ENCODE measurements at regions of chr10 and their contacts with region 1.

Region 1: GRCh38 chr10:45464958-45465567 is 91.0 kb downstream of the ALOX5 start:
- H3K4me3 Mint-ChIP-seq: peak overlapping the region; percentile 52
- H3K27ac Mint-ChIP-seq: peak overlapping the region; percentile 31
- H3K4me1 Mint-ChIP-seq: peaks cover 91% of the 10 kb centered on the region
- H3K27me3 Mint-ChIP-seq: no peaks in the 10 kb centered on the region

Region 2: DNA sequence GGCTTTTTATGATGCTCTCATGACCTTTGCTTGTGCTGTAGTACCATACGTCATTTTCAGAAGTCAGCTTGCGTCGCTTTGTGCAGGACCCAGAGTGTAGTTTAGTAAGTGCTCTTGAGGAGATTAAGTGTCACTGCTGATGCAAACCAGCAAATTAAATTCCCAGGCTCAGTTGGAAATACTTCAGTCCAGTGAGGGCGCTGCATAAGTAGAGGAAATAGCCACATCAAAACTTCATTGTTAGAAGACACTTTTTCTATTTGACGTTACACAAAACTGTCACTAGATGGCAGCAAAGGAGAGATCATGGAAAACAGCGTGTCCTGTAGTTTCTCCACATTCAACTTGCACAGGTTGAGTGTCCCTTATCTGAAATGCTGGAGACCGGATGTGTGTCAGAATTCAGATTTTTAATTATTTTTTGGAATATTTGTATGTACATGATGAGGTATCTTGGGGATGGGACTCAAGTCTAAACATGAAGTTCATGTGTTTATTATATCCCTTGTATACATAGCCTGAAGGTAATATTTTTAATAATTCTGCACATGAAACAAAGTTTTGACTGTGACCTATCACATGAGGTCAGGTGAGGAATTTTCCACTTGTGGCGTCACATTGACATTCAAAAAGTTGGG is 456.4 kb before region 1 on chr10:
- intact Hi-C with region 1: loop called (anchors 5 kb)
- H3K4me3 Mint-ChIP-seq: no peak overlapping the region
- H3K27ac Mint-ChIP-seq: no peak overlapping the region
- H3K4me1 Mint-ChIP-seq: peaks cover 14% of the 10 kb centered on the region
- H3K27me3 Mint-ChIP-seq: no peaks in the 10 kb centered on the region

Region 3: DNA sequence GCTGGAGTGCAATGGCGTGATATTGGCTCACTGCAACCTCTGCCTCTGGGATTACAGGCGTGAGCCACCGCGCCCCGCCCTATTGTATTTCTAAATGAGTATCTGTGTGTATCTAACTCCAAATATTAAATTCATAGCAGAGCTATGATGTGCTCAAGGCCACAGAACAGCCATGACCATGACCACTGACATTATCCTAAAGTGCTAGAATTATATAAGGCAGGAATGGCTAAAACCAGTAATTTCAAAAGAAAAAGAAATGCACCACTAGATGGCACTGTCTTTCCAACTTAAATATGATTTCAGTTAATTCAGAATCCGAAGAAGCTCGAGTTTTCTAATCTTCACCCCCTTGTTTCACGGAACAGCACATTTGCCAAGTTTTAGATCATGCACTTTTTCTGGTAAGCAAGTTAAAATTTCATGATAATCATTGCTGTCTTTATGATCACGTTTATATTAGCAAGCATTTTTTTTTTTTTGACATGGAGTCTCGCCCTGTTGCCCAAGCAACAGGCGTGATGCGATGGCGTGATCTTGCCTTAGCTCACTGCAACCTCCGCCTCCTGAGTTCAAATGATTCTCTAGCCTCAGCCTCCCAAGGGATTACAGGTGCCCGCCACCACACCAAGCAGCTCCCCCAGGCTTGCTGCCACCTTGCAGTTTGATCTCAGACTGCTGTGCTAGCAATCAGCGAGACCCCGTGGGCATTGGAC is 214.9 kb before region 1 on chr10:
- intact Hi-C with region 1: loop called (anchors 2 kb)
- H3K4me3 Mint-ChIP-seq: peak overlapping the region; percentile 56
- H3K27ac Mint-ChIP-seq: peak overlapping the region; percentile 64
- H3K4me1 Mint-ChIP-seq: peaks cover 25% of the 10 kb centered on the region
- H3K27me3 Mint-ChIP-seq: peaks cover 10% of the 10 kb centered on the region

Region 4: DNA sequence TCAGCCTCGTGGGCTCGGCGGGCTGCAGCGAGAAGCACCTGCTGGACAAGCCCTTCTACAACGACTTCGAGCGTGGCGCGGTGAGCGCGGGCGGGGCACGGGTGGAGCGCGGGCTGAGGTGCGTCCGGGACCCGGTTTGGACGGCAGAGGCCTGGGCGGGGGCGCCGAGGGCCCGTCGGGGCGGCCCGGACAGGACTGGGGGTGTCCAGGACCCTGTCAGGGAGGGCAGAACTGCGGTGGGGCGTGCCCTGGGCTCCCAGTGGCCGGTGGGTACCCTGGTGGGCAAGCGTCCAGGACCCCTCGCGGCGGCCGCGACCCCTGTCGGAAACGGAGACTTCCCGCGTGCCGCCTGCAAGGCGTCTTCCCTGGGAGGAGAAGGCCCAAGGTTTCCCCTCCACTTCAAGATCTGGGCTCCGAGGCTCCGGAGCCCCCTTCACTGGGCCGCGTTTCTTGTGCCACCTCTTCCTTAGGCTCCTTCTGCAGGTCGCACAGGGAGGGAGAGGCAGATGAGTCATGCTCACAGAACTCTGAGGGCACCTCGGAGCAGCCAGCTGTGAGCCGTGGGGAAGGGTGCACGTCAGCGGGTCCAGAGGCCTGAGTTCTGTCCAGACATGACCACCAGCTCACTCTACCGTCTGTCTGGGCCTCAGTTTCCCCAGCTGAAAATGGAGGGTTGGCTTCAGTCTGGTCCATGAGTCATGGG is 90.6 kb before region 1 on chr10:
- intact Hi-C with region 1: loop called (anchors 5 kb)
- H3K4me3 Mint-ChIP-seq: peak overlapping the region; percentile 87
- H3K27ac Mint-ChIP-seq: peak overlapping the region; percentile 77
- H3K4me1 Mint-ChIP-seq: peaks cover 68% of the 10 kb centered on the region
- H3K27me3 Mint-ChIP-seq: peaks cover 16% of the 10 kb centered on the region

Region 5: DNA sequence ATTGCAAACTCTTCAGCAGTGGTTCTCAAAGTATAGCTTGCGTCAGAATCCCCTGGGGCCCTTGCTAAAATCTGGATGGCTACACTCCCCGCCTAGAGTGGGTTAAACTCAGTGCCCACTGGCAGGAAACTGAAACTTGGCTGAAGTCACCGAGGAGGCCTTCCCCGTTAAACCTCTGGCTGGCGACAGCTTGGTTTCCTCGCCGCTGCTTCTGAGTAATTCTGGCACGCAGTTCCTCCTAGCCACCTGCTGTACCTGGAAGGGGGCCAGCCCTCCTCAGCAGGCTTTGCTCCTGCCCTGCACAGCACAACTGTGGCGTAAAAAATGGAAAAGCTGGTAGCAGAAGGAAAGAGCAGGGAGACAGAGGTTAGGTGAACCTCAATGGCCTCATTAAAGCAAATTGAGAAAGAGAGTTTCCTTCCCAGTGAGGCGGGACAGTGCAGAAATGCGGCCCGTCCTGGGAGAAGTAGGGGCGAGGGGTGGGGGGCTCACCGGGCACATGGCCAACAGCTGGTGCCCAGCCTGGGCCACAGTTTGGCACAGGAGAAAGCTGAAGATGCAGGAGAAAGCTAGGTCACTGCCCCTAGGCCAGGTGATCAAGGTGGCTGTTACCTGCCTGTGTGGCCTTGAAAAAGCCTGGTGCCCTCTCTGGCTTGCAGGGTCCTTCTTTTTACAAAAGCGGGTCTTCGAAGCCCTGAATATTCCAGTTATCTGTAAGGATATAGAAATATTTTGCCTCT is 44.4 kb before region 1 on chr10:
- intact Hi-C with region 1: loop called (anchors 1 kb)
- H3K4me3 Mint-ChIP-seq: peak overlapping the region; percentile 97
- H3K27ac Mint-ChIP-seq: peak overlapping the region; percentile 100
- H3K4me1 Mint-ChIP-seq: peaks cover 91% of the 10 kb centered on the region
- H3K27me3 Mint-ChIP-seq: no peaks in the 10 kb centered on the region

Region 6: DNA sequence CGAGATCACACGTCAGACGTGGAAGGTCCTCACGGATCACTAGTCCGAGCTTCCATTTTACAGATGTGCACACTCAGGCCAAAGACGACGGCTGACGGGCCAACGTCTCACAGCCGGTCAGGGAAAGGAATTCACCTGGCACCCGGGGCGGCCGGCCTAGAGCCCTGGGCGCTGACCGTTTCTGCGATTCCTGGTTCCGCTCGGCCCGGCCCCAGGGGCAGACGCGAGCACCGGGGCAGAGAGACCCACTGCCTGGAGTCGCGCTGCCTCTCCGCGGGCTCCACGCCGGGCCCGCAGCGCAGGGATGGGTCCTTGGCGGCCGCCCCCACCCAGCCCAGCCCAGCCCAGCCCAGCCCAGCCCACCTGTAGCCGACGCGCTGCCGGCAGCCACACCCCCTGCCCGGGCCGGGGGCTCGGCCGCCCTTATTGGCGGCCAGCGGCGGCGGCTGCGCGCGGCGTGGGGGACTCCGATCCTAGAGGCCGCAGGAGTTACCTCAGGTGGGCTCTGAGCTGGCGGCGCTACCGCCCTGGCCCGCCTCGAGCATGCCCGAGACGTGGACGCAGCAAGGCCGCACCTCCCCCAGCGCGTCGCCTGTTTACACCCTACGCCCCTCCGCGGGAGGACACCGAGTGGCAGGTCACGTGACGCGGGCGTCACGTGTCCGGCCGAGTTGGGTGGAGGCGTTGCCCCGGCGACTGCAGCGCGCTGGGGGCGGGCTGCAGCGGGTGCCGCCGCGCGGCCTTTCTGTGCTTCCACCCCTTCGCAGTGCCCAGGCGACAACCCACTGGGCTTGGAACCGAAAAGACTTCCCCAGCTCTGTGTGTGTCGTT is 129.4 kb after region 1 on chr10:
- intact Hi-C with region 1: loop called (anchors 5 kb)
- H3K4me3 Mint-ChIP-seq: peak overlapping the region; percentile 81
- H3K27ac Mint-ChIP-seq: peak overlapping the region; percentile 77
- H3K4me1 Mint-ChIP-seq: peaks cover 43% of the 10 kb centered on the region
- H3K27me3 Mint-ChIP-seq: peaks cover 15% of the 10 kb centered on the region

Region 7: DNA sequence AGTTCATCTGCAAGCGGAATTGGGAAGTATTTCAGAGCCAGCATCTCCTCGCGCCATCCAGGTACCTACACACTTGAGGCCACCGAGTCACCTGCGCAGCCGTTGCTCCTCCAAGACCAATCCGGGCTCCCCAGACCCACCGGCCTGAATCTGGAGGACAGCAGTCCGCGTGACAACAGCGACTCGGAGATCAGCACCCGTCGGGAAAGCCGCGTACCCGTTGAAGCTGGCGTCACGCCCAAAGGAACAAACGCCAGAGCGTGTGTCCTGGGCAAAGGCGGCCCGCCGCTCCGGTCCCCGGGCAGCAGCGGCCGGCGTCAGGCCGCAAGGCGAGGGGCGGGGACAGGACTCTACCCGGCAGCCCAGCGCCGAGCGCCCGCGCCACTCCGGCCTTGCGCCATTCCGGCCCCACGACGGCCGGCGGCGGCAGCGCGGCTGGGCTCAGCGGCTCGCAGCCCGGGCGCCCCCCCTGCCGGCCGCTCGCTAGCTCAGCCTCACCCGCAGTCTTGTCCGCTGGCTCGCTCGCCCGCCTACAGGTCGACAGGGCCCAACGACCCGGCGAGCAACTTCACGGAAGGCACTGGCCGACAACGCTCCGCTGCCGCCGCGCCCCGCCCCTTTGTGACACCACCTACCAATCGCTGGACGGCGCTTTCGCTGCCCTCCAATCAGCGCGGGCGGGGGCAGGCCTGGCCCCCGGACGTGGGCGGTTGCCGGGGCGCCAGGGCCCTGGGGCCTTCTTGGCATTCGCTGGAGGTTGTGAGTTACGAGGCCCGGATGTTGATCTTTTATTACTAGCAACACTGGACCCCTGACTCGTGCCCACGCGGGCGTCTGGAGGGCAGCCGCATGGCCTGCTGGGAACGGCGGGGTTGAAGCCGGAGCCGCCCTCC is 207.4 kb after region 1 on chr10 and contains the start of gene ZFAND4:
- intact Hi-C with region 1: loop called (anchors 1 kb)
- H3K4me3 Mint-ChIP-seq: peak within 1 kb of the TSS; percentile 82
- H3K27ac Mint-ChIP-seq: peak within 1 kb of the TSS; percentile 89
- H3K4me1 Mint-ChIP-seq: peaks cover 20% of the 10 kb centered on the region
- H3K27me3 Mint-ChIP-seq: no peaks in the 10 kb centered on the region

Measured in dendritic cell treated with granulocyte-macrophage colony-stimulating factor and Interleukin-4, amounts not matched to agents 40 ng/mL and 50 ng/mL, for 4 days (primary cell).